Heart left ventricle (tissue), 16 donors: ENCODE measurements at regions of chr3 and their contacts with region 1.

Region 1: DNA sequence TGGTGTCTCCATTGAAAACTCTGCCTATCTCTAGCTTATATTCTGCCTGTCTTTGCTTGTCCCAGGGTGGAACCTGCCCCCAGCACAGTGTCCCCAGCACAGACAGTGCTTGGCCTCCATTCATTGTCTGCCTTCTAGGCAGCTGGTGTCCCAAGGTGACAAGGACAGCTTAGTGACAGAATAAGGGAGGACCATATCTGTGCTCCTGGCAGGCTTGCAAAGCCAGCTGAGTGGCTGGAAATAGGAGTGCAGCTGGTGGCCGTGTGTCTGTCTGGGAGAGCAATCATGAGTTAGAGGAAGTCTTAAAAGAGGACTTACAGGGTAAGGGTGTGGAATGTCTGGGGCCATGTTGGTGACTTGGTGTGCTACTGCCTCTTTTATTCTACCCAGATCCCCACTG is 33.4 kb downstream of the SCN5A start:
- DNase-seq: peak in 4 of 5 donors; percentile 64 to 84 (median 73)
- ATAC-seq: peak; percentile 76 to 94 (median 84)
- H3K4me3 ChIP-seq: no peak overlapping the region
- H3K27ac ChIP-seq: peak overlapping the region; percentile 37 to 95 (median 78)
- H3K4me1 ChIP-seq: peaks cover 0 to 61% (median 31%) of the 10 kb centered on the region in 12 donors
- H3K27me3 ChIP-seq: no peaks in the 10 kb centered on the region
- CTCF ChIP-seq: peak in 1 of 12 donors; percentile 7
- POLR2A ChIP-seq: no peak

Region 2: DNA sequence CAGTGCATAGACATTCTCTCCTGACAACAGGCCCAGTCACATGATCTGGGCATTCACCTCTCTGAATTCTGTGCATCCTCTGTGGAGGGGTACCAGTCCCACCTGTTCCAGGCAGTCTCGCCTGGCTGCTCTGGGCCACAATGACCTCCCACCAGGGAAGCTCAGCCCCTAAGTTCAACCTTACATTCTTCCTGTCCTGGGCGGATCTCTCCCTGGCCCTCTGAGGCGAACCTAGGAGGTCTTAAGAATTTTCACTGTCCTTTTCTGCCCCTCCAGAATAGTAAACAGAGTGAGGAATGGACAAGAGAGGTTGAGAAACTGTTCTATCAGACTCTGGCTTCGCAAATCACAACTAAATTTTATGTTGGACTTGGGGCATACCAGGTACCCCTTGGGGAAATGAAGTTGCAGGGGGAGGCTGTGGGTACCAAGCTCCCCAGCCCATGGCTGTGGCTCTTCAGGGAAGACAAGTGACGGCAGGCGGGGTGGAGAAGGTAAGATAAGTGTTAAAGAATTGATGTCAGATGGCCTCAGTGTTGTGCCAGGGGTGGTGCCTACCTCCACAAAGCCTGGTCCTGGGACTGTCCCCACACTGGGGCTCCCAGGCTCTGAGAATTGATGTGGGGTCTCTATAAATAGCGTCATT is 28.0 kb after region 1 on chr3:
- intact Hi-C with region 1: loop called in 3 of 10 experiments (anchors 2 kb)
- DNase-seq: peak in 1 of 5 donors; percentile 13
- ATAC-seq: no peak
- H3K4me3 ChIP-seq: peak overlapping the region in 2 of 12 donors; percentile 3 to 29
- H3K27ac ChIP-seq: peak overlapping the region; percentile 22 to 98 (median 92)
- H3K4me1 ChIP-seq: peaks cover 0 to 89% (median 22%) of the 10 kb centered on the region in 12 donors
- H3K27me3 ChIP-seq: peaks cover 0 to 36% (median 11%) of the 10 kb centered on the region in 9 donors
- CTCF ChIP-seq: no peak
- POLR2A ChIP-seq: no peak

Region 3: GRCh38 chr3:38723569-38724394 is 107.7 kb after region 1 on chr3:
- intact Hi-C with region 1: no loop called
- DNase-seq: peak in 4 of 5 donors; percentile 62 to 87 (median 66)
- ATAC-seq: peak; percentile 72 to 77 (median 76)
- H3K4me3 ChIP-seq: no peak overlapping the region
- H3K27ac ChIP-seq: peak overlapping the region; percentile 9 to 87 (median 74)
- H3K4me1 ChIP-seq: peaks cover 0 to 36% (median 16%) of the 10 kb centered on the region in 12 donors
- H3K27me3 ChIP-seq: no peaks in the 10 kb centered on the region
- CTCF ChIP-seq: no peak
- POLR2A ChIP-seq: no peak